ENCODE measurements at regions of chr1 and their contacts with region 1.

Region 1: GRCh38 chr1:99634971-99635624 is 10.8 kb upstream of the PALMD start:
- DNase-seq: no peak
- ATAC-seq: no peak
- H3K4me3 ChIP-seq: no peak overlapping the region
- H3K27ac ChIP-seq: peak overlapping the region in 1 of 4 donors; percentile 26
- H3K4me1 ChIP-seq: peaks cover 0 to 3% of the 10 kb centered on the region in 2 donors
- H3K27me3 ChIP-seq: no peaks in the 10 kb centered on the region
- CTCF ChIP-seq: no peak
- POLR2A ChIP-seq: no peak

Region 2: DNA sequence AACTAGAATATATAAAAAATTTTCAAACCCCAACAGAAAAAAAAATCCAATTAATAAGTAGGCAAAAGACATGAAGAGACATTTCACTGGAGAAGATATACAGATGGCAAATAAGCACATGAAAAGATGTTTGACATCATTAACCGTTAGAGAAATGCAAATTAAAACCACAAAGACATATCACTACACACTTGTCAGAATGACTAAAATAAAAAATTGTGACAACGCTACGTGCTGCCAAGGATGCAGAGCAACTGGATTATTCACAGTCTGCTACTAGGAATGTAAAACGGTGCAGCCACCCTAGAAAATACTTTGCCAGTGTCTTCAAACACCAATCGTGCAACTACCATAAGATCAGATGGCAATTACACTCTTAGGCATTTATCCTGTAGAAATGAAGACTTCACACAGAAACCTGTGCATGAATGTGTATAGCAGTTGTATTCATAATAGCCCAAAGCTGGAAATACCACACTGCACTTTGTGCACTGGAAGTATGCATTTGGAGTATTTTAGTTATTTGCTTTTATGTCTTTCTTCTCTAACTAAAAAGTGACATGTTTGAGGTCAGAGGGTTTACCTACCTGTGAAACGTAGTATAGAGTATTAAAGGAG is 64.5 kb before region 1 on chr1:
- in situ Hi-C with region 1: loop called in 1 of 4 experiments (anchors 10 kb)
- intact Hi-C with region 1: no loop called
- DNase-seq: no peak
- ATAC-seq: no peak
- H3K4me3 ChIP-seq: no peak overlapping the region
- H3K27ac ChIP-seq: no peak overlapping the region
- H3K4me1 ChIP-seq: no peaks in the 10 kb centered on the region
- H3K27me3 ChIP-seq: no peaks in the 10 kb centered on the region
- CTCF ChIP-seq: no peak
- POLR2A ChIP-seq: no peak

Measured in gastrocnemius medialis (tissue), 4 donors.